ENCODE measurements at regions of chr18 and their contacts with region 1.

Region 1: GRCh38 chr18:75210274-75211001 is at the start of gene TSHZ1:
- DNase-seq: peak; percentile 62 to 86 (median 75)
- H3K4me3 ChIP-seq: peak within 1 kb of the TSS; percentile 62 to 96 (median 78)
- H3K27ac ChIP-seq: peak within 1 kb of the TSS; percentile 90 to 99 (median 93)
- H3K4me1 ChIP-seq: peaks cover 20 to 45% of the 10 kb centered on the region in 2 donors
- H3K27me3 ChIP-seq: no peaks in the 10 kb centered on the region
- CTCF ChIP-seq: no peak
- POLR2A ChIP-seq: peak; percentile 49 to 89
- total RNA-seq, gene TSHZ1: 10.2 to 25.0 (median 16.7) TPM

Region 2: DNA sequence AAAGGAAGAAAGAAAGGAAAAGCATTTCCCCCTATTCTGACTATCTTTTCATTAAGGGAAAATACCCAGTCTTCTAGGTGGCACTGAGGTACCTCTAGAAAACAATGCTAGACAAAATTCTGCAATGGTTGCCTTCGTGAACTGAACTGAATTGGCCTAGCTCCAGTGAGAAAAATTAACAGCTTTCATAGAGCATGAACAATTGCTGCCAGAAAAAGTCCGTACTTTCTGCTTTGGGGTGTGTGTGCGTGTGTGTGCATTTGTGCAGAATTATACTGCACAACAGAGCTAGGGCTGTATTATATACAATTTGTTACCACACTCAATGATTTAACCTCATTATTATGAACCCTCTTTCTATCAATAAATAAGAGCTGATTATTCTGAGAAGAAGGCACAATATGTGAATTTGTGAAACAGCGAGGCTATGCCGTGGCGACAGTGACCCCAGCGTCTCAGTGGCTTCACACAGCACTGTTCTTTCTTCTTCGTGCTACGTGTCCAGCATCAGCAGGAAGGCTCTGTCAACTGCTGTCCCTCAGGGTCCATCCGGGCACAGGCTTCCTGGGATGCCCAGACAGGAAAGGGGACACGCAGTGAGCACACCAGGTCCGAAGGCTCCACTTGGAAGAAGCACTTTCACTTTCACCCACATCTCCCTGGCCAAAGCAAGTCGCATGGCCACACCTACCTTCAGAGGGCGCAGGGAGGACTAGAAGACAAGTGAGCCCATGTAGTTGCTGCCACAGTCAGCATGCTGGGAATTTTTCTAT is 49.0 kb before region 1 on chr18:
- intact Hi-C with region 1: no loop called
- DNase-seq: peak in 5 of 7 donors; percentile 22 to 67 (median 34)
- H3K4me3 ChIP-seq: peak overlapping the region in 1 of 4 donors; percentile 29
- H3K27ac ChIP-seq: no peak overlapping the region
- H3K4me1 ChIP-seq: peaks cover 0 to 5% of the 10 kb centered on the region in 2 donors
- H3K27me3 ChIP-seq: no peaks in the 10 kb centered on the region
- CTCF ChIP-seq: no peak
- POLR2A ChIP-seq: no peak

Region 3: GRCh38 chr18:75247611-75248421 is 37.4 kb after region 1 on chr18:
- intact Hi-C with region 1: loop called in 1 of 2 experiments (anchors 5 kb)
- DNase-seq: no peak
- H3K4me3 ChIP-seq: peak overlapping the region in 2 of 4 donors; percentile 32 to 55
- H3K27ac ChIP-seq: peak overlapping the region; percentile 32 to 91 (median 76)
- H3K4me1 ChIP-seq: peaks cover 19 to 61% of the 10 kb centered on the region in 2 donors
- H3K27me3 ChIP-seq: no peaks in the 10 kb centered on the region
- CTCF ChIP-seq: no peak
- POLR2A ChIP-seq: peak in 1 of 2 donors; percentile 36